ENCODE measurements at regions of chr19 and their contacts with region 1.

Region 1: GRCh38 chr19:11964858-11965645 is at the start of gene ZNF763:
- DNase-seq: peak; percentile 90 to 92
- ATAC-seq: peak; percentile 89 to 94 (median 90)
- H3K4me3 ChIP-seq: peak within 1 kb of the TSS; percentile 86
- H3K4me3 Mint-ChIP-seq: peak within 1 kb of the TSS; percentile 90
- H3K27ac ChIP-seq: peak within 1 kb of the TSS; percentile 91
- H3K27ac Mint-ChIP-seq: peak within 1 kb of the TSS; percentile 95
- H3K4me1 ChIP-seq: peaks cover 18% of the 10 kb centered on the region
- H3K4me1 Mint-ChIP-seq: peaks cover 22 to 28% of the 10 kb centered on the region in 2 donors
- H3K27me3 ChIP-seq: no peaks in the 10 kb centered on the region
- H3K27me3 Mint-ChIP-seq: no peaks in the 10 kb centered on the region
- CTCF ChIP-seq: no peak
- total RNA-seq, gene ZNF763: 4.8 to 7.7 (median 5.8) TPM

Region 2: DNA sequence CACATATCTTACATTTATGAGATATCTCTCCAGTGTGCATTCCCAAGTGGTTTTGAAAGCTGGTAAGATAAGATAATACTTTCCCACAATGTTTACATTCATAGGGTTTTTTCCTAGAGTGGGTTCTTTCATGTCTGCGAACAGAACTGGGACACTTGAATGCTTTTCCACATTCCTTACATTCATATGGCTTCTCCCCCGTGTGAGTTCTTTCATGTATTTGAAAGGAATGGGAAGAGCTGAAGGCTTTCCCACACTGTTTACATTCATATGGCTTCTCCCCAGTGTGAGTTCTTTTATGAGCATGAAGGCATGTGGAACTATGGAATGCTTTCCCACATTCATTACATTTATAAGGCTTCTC is 50.7 kb after region 1 on chr19:
- intact Hi-C with region 1: no loop called
- DNase-seq: no peak
- ATAC-seq: no peak
- H3K4me3 ChIP-seq: no peak overlapping the region
- H3K4me3 Mint-ChIP-seq: no peak overlapping the region
- H3K27ac ChIP-seq: no peak overlapping the region
- H3K27ac Mint-ChIP-seq: no peak overlapping the region
- H3K4me1 ChIP-seq: no peaks in the 10 kb centered on the region
- H3K4me1 Mint-ChIP-seq: no peaks in the 10 kb centered on the region
- H3K27me3 ChIP-seq: no peaks in the 10 kb centered on the region
- H3K27me3 Mint-ChIP-seq: no peaks in the 10 kb centered on the region
- CTCF ChIP-seq: no peak

Region 3: DNA sequence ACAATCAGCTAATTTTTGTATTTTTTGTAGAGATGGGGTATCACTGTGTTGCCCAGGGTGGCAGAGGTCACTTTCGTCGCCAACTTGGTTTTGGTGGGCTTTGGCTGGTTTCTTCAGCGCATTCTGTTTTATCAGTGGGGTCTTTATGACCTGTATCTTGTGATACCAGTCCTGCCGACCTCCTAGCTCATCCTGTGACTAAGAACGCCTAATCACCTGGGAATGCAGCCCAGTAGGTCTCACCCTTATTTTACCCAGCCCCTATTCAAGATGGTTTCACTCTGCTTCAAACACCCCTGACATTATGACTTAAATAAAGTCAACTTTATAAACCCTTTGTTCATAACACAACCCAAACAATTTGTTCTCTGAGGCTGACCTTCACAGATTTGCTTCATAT is 90.7 kb after region 1 on chr19:
- intact Hi-C with region 1: loop called (anchors 5 kb)
- DNase-seq: no peak
- ATAC-seq: no peak
- H3K4me3 ChIP-seq: no peak overlapping the region
- H3K4me3 Mint-ChIP-seq: no peak overlapping the region
- H3K27ac ChIP-seq: no peak overlapping the region
- H3K27ac Mint-ChIP-seq: no peak overlapping the region
- H3K4me1 ChIP-seq: peaks cover 18% of the 10 kb centered on the region
- H3K4me1 Mint-ChIP-seq: peaks cover 12 to 18% of the 10 kb centered on the region in 2 donors
- H3K27me3 ChIP-seq: no peaks in the 10 kb centered on the region
- H3K27me3 Mint-ChIP-seq: peaks cover 7 to 11% of the 10 kb centered on the region in 2 donors
- CTCF ChIP-seq: no peak

Region 4: DNA sequence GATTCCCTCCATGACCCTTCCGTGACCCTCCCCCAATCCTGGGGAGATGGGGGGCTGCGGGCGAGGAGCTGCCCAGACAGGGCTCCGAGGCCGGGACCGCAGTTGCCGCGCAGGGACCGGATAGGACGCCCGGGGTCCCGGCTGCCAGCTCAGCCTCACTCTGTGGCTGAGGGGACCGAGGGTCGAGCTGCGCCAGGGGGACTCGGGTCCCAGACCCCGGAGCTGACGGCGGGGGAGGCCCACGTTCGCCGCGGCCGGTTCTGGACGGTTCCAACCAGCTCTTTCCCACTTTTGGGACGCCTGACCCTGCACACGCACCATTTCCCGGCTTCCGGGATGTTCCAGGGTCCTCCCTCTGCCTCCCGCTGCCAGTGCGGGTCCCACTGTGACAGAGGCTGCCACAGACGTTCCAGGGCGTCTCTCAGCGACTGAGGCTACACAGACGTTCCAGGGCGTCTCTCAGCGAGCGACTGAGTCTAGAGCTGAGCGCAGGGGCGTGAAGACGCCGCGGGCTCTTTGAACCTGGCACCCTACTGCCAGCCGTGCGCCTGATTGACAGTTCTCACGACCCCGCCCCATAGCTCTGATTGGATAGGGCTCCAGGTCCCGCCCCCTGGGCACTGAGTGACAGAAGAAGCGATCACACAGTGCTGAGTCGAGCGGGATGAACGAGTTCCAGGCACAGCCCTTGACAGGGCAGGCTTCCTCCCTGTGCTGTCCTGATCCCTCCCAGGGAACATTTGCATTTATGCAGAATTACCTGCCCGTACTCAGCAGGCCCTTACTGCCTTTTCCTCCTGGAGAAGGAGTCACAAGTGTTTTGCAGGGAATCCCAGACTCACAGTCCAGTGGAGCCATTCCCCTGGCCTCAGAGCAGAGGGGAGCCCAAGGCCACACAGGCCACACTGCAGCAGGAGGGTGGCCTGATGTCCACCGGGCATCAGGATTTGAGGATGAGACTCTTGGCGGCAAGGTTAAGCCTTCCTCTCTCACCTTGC is 368.4 kb after region 1 on chr19 and contains the start of gene ZNF563:
- intact Hi-C with region 1: no loop called
- DNase-seq: peak; percentile 97
- ATAC-seq: peak; percentile 96 to 98 (median 98)
- H3K4me3 ChIP-seq: peak within 1 kb of the TSS; percentile 73
- H3K4me3 Mint-ChIP-seq: peak within 1 kb of the TSS; percentile 99
- H3K27ac ChIP-seq: peak within 1 kb of the TSS; percentile 81
- H3K27ac Mint-ChIP-seq: peak within 1 kb of the TSS; percentile 91 to 97
- H3K4me1 ChIP-seq: peaks cover 19% of the 10 kb centered on the region
- H3K4me1 Mint-ChIP-seq: peaks cover 26 to 30% of the 10 kb centered on the region in 2 donors
- H3K27me3 ChIP-seq: no peaks in the 10 kb centered on the region
- H3K27me3 Mint-ChIP-seq: no peaks in the 10 kb centered on the region
- CTCF ChIP-seq: no peak
- total RNA-seq, gene ZNF563: 0.78 to 1.00 (median 0.80) TPM

Measured in natural killer cell (primary cell).